ENCODE measurements at regions of chr14 and their contacts with region 1.

Region 1: GRCh38 chr14:96424109-96424989 is 32.4 kb downstream of the AK7 start:
- DNase-seq: peak; percentile 83
- H3K4me3 ChIP-seq: peak overlapping the region; percentile 10 to 64 (median 33)
- H3K27ac ChIP-seq: peak overlapping the region in 2 of 8 donors; percentile 15 to 22
- H3K4me1 ChIP-seq: peaks cover 0 to 25% (median 5%) of the 10 kb centered on the region in 6 donors
- H3K27me3 ChIP-seq: peaks cover 0 to 9% (median 0%) of the 10 kb centered on the region in 7 donors
- CTCF ChIP-seq: peak; percentile 53 to 91 (median 81)
- POLR2A ChIP-seq: no peak

Region 2: DNA sequence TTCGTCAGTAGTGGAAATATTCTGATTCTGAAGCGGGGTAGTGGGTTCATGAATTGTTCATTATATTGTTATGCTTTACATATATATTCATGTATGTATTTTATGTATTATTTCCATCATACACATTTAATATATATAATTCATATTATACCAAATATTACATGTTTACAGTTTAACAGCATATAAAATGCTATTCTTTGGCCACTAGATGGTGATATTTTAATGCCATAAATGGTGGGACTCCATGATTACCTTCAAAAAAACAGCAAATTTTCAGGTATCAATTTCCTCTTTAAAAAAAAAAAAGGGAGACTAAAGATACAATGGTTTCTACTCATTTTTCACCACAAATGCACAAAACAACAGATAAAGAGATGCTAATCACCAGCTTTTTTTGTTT is 127.3 kb before region 1 on chr14:
- intact Hi-C with region 1: loop called (anchors 5 kb)
- DNase-seq: no peak
- H3K4me3 ChIP-seq: no peak overlapping the region
- H3K27ac ChIP-seq: no peak overlapping the region
- H3K4me1 ChIP-seq: no peaks in the 10 kb centered on the region
- H3K27me3 ChIP-seq: no peaks in the 10 kb centered on the region
- CTCF ChIP-seq: peak in 10 of 11 experiments; percentile 10 to 64 (median 50)
- POLR2A ChIP-seq: no peak

Measured in spleen (tissue), 13 donors.